Dorsolateral prefrontal cortex (tissue), 120 donors: ENCODE measurements at regions of chr5 and their contacts with region 1.

Region 1: GRCh38 chr5:72816311-72817145 is at the start of gene TNPO1:
- DNase-seq: peak; percentile 79 to 94 (median 89)
- H3K4me3 ChIP-seq: peak within 1 kb of the TSS; percentile 61 to 97 (median 87)
- H3K27ac ChIP-seq: peak within 1 kb of the TSS; percentile 85 to 99 (median 97)
- H3K27me3 ChIP-seq: no peaks in the 10 kb centered on the region
- CTCF ChIP-seq: peak in 36 of 56 donors; percentile 4 to 70 (median 31)
- total RNA-seq, gene TNPO1: 61.1 to 127 (median 93.1) TPM

Region 2: GRCh38 chr5:72366324-72366976 is 450.1 kb before region 1 on chr5:
- intact Hi-C with region 1: loop called (anchors 10 kb)
- DNase-seq: peak in 5 of 10 donors; percentile 48 to 74 (median 54)
- H3K4me3 ChIP-seq: no peak overlapping the region
- H3K27ac ChIP-seq: no peak overlapping the region
- H3K27me3 ChIP-seq: no peaks in the 10 kb centered on the region
- CTCF ChIP-seq: peak; percentile 48 to 87 (median 74)

Region 3: DNA sequence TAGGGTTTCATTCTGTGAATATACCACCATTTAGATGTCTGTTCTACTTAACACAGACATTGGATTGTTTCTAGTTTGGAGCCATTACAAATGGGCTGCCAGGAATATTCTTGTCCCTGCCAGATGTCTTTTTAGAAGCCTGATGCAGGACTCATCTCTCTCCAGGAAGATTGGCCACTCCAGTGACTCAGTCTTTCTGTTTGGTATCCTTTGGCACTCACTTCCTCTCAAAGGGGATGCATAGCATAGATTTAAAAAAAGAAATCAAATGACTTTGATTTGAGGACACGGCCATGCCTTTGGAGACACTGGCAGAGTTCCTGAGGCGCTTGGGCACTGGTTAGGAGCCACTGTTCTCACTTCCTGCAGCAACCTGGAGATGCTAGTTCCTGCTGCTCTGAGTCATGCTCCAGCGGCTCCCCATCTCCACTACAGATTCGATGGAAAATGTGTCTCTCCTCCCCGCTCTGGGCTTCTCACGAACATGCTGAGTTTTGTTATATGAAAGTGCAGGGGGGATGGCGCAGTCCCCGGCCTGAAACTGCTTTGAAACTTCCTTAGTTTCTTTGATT is 305.8 kb before region 1 on chr5:
- intact Hi-C with region 1: loop called in 1 of 2 experiments (anchors 10 kb)
- DNase-seq: peak in 9 of 10 donors; percentile 13 to 77 (median 60)
- H3K4me3 ChIP-seq: peak overlapping the region in 5 of 59 donors; percentile 6 to 34 (median 24)
- H3K27ac ChIP-seq: peak overlapping the region in 45 of 59 donors; percentile 3 to 82 (median 59)
- H3K27me3 ChIP-seq: no peaks in the 10 kb centered on the region
- CTCF ChIP-seq: no peak

Region 4: DNA sequence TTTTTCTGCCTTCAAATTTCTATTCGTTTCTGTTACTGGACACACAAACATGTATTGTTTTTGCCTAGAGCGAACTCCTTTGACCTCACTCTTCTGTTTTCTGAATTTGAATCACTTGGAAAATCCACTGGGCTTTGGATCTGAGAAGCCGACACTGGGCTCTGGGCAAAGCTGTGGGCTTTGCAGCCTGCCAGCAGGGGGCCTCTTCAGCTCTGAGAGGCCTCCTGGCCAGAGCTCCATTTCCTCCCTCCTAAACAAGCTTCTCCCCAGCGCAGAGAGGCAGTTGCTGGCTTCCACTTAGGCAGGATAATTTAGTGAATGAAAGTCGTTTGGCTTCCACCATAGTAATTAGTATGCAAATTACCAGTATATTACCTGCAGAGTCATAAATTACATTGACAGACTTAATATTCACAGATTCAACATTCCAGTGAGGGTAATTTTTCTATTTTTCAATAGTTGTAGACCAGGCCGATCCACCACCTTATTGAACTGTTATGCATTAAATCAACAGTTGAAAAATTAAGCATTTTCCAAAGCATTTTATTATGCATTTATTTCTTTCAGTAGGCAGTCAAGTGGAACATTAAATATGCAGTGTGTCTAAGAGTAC is 205.3 kb before region 1 on chr5:
- intact Hi-C with region 1: loop called (anchors 1 to 2 kb)
- DNase-seq: peak; percentile 71 to 91 (median 86)
- H3K4me3 ChIP-seq: peak overlapping the region in 50 of 59 donors; percentile 2 to 59 (median 27)
- H3K27ac ChIP-seq: peak overlapping the region in 56 of 59 donors; percentile 5 to 89 (median 72)
- H3K27me3 ChIP-seq: no peaks in the 10 kb centered on the region
- CTCF ChIP-seq: peak; percentile 82 to 98 (median 94)

Region 5: DNA sequence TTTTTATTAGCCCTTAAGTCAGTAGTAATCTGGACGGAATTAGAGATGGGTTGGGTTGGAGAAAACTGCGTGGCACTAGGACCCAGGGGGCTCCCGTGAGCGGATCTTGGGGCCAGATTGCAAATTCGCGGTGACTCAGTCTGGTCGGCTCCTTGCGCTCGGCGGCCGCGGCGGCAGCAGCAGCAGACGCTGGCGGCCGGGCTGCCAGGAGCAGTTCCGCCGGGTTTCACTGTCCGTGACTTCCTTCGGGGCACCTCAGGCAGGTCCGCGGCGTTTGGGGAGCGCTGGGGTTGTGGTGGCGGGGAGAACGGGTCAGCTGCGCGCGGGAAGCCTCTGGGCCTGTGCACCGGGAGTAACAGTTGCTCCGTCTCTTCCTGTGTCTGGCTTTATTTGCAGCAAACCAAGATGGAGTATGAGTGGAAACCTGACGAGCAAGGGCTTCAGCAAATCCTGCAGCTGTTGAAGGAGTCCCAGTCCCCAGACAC is 31.5 kb after region 1 on chr5:
- intact Hi-C with region 1: loop called (anchors 1 to 2 kb)
- DNase-seq: peak; percentile 92 to 97 (median 94)
- H3K4me3 ChIP-seq: peak overlapping the region; percentile 52 to 90 (median 80)
- H3K27ac ChIP-seq: peak overlapping the region; percentile 82 to 97 (median 94)
- H3K27me3 ChIP-seq: no peaks in the 10 kb centered on the region
- CTCF ChIP-seq: peak in 38 of 56 donors; percentile 7 to 55 (median 31)

Region 6: DNA sequence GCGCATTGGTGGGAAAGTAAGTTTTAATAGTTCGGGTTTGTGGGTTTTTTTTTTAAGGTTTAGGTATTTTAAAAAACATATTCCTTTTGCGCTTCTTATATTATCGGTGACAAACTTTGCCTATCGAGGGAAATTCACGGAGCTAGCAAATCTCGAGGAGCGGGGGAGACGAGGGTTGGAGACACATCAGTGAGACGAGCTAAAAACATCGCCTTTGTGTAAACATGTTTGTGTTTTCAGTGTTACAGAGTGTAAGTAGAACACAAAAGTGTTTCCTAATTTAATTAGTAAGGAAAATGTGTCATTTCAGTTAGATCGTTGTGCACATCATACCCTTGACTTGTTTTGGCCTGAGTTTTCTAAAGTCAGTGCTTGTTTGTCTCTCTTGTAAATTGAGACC is 682.7 kb after region 1 on chr5:
- intact Hi-C with region 1: no loop called
- DNase-seq: no peak
- H3K4me3 ChIP-seq: peak overlapping the region; percentile 57 to 100 (median 93)
- H3K27ac ChIP-seq: peak overlapping the region in 19 of 59 donors; percentile 88 to 98 (median 94)
- H3K27me3 ChIP-seq: no peaks in the 10 kb centered on the region
- CTCF ChIP-seq: no peak